HCT116 (cell line): ENCODE measurements at regions of chr11 and their contacts with region 1.

Region 1: GRCh38 chr11:82867495-82868082 is 32.6 kb downstream of the PRCP start:
- DNase-seq: peak; percentile 64
- ATAC-seq: peak; percentile 63
- H3K4me3 ChIP-seq: no peak overlapping the region
- H3K27ac ChIP-seq: no peak overlapping the region
- H3K4me1 ChIP-seq: peaks cover 0 to 3% of the 10 kb centered on the region in 2 experiments; a peak in 1 of 4 replicates
- H3K27me3 ChIP-seq: no peaks in the 10 kb centered on the region
- CTCF ChIP-seq: peak; percentile 55 to 80 (median 63); a peak in 5 of 6 replicates
- POLR2A ChIP-seq: no peak
- RAD21 ChIP-seq: peak; percentile 82

Region 2: DNA sequence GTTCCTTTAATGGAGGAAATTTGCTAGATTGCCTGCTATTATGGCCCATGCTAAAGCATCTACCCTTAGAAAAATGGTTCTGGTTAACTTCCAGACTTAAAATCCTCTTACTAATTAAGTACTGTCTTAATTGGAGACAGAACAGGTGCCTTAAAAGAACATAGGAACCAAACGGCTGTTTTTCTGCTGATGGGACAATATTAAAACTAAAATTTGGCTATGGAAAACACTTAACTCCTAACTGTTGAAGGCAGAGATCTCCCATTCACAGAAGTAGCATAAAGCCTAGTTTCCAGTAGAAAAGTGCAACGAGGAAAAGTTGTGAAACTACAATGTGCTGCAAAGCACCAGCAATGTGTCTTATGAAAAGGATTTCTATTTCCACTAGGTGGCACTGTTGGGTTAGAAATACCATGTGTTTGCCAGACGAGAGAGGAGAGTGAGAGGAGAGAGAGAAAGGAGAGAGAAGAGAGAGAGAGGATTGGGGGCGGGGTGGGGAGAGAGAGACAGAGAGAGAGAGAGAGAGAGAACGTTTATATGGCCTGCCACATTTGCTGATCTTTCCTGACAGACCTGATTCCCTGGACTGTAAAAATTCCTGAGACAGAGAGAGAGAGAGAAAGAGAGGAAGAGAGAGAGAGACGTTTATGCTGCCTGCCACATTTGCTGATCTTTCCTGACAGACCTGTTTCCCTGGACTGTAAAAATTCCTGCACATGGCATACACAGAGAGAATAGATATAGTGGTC is 185.4 kb before region 1 on chr11:
- CTCF ChIA-PET with region 1: no interaction called
- POLR2A ChIA-PET with region 1: no interaction called
- RAD21 ChIA-PET with region 1: no interaction called
- intact Hi-C with region 1: loop called (anchors 1 kb)
- DNase-seq: peak; percentile 65
- ATAC-seq: peak; percentile 97
- H3K4me3 ChIP-seq: no peak overlapping the region
- H3K27ac ChIP-seq: no peak overlapping the region
- H3K4me1 ChIP-seq: no peaks in the 10 kb centered on the region
- H3K27me3 ChIP-seq: peaks cover 11% of the 10 kb centered on the region; the same call in 1 of the 2 replicates
- CTCF ChIP-seq: peak; percentile 46 to 77 (median 72); a peak in 5 of 6 replicates
- POLR2A ChIP-seq: no peak
- RAD21 ChIP-seq: peak; percentile 73

Region 3: DNA sequence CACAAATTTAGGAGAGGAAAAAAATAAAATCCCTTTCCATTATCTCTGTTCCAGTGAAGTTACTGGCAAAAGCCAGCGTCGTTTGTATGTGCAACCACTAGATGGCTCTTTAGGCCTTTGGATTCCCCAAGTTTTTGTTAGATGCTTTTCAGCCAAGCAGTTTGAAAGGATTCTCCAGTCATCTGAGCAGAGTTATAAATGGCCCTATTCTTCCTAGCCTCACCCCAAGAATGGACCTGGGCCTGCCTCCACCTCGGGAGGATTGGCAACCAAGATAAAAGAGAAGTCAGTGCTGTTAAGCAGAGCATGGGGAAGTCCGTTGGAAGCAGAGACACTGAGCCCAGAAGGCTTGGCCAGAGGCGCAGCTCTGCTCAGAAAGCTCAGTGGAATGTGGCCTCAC is 149.3 kb before region 1 on chr11:
- CTCF ChIA-PET with region 1: interaction called, 4 read pairs
- POLR2A ChIA-PET with region 1: no interaction called
- RAD21 ChIA-PET with region 1: no interaction called
- intact Hi-C with region 1: loop called (anchors 1 kb)
- DNase-seq: peak; percentile 19
- ATAC-seq: peak; percentile 85
- H3K4me3 ChIP-seq: no peak overlapping the region
- H3K27ac ChIP-seq: no peak overlapping the region
- H3K4me1 ChIP-seq: no peaks in the 10 kb centered on the region
- H3K27me3 ChIP-seq: peaks cover 23% of the 10 kb centered on the region
- CTCF ChIP-seq: peak; percentile 58 to 74 (median 73); a peak in 5 of 6 replicates
- POLR2A ChIP-seq: no peak
- RAD21 ChIP-seq: peak; percentile 71

Region 4: DNA sequence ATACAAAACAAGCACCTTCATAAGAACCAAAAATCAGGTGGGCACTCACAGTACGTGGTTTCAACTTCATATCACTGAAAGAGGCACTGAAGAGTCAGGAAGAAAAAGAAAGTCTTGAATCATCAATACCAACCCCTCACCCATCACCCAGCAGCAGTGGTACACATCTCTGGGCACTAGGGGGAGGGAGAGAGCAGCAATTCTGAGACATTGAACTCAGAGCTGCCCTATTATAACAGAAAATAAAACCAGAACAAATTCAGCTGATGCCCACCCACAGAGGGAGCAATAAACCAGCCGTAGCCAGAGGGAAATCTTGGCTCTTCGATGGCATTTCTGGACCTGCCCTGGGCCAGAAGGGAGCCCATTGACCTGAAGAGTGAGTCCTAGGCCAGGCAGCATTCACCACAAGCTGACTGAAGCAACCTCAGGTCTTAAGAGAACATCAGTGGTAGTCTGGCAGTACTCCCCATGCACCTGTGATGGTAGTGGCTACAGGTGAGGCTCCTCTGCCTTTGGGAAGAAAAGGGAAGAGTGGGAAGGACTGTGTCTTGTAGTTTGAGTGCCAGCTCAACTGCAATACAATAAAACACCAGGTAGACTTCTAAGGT is 91.7 kb before region 1 on chr11:
- CTCF ChIA-PET with region 1: interaction called, 5 read pairs
- POLR2A ChIA-PET with region 1: no interaction called
- RAD21 ChIA-PET with region 1: no interaction called
- intact Hi-C with region 1: loop called (anchors 2 kb)
- DNase-seq: peak; percentile 36
- ATAC-seq: peak; percentile 100
- H3K4me3 ChIP-seq: peak overlapping the region in 1 of 2 experiments; percentile 2; a peak in 1 of 4 replicates
- H3K27ac ChIP-seq: no peak overlapping the region
- H3K4me1 ChIP-seq: no peaks in the 10 kb centered on the region
- H3K27me3 ChIP-seq: peaks cover 5% of the 10 kb centered on the region; the same call in 1 of the 2 replicates
- CTCF ChIP-seq: peak; percentile 71 to 95 (median 89); a peak in 5 of 6 replicates
- POLR2A ChIP-seq: no peak
- RAD21 ChIP-seq: peak; percentile 65

Region 5: DNA sequence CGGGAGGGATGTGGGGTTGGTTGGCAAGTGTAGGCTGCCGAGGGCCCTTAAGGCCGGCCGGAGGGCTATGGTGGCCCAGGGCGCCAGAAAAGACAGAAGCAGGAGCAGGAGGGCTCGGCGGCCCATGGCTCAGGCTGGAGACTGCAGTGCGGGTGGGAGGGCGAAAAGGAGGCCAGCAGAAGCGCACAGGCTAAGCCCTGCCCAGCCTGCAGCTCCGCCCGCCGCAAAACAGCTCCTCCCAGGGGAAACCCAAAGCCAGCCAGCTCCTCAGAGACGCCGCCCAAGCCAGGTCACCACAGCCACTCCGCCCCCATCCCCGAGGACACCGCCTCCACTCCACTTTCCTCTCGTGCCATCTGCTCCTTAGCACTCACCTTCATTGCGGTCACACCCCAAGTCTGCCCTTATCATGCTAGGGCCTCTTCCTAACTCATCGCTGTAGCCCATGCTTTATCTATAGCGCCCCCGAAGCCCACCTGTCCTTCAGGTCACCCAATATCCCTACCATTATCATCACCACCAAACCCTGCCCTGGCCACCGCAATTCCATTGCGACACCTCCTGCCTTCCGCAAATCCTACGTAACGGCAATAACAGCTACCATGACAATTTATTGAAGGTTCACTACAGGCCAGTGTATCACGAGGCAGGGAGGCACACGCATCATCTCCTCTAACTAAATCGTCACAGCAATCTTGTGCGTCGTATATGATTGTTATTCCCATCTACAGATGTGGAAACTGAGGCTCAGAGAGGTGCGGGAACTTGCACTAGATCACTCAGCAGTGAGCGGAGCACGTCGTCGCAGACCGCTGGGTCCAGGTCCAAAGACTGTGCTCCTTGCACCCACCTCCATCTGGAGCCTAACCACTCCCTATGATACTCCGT is 32.9 kb after region 1 on chr11 and contains the start of gene PRCP:
- CTCF ChIA-PET with region 1: interaction called, 14 read pairs
- POLR2A ChIA-PET with region 1: interaction called, 3 read pairs
- RAD21 ChIA-PET with region 1: no interaction called
- intact Hi-C with region 1: loop called (anchors 2 kb)
- DNase-seq: peak; percentile 82
- ATAC-seq: peak; percentile 89
- H3K4me3 ChIP-seq: peak within 1 kb of the TSS; percentile 55 to 96
- H3K27ac ChIP-seq: peak within 1 kb of the TSS; percentile 69
- H3K4me1 ChIP-seq: peaks cover 10 to 24% of the 10 kb centered on the region in 2 experiments; a peak in 3 of 4 replicates
- H3K27me3 ChIP-seq: no peaks in the 10 kb centered on the region
- CTCF ChIP-seq: 0 out of 6 replicates have a peak, but pooled peaks of 1 of the 3 experiments have one; percentile 2
- POLR2A ChIP-seq: peak; percentile 59
- RAD21 ChIP-seq: no peak
- total RNA-seq, gene PRCP: 50.0 TPM

Region 6: GRCh38 chr11:83235825-83236224 is 368.2 kb after region 1 on chr11:
- CTCF ChIA-PET with region 1: no interaction called
- POLR2A ChIA-PET with region 1: no interaction called
- RAD21 ChIA-PET with region 1: no interaction called
- intact Hi-C with region 1: no loop called
- DNase-seq: no peak
- ATAC-seq: no peak
- H3K4me3 ChIP-seq: no peak overlapping the region
- H3K27ac ChIP-seq: no peak overlapping the region
- H3K4me1 ChIP-seq: no peaks in the 10 kb centered on the region
- H3K27me3 ChIP-seq: no peaks in the 10 kb centered on the region
- CTCF ChIP-seq: no peak
- POLR2A ChIP-seq: no peak
- RAD21 ChIP-seq: no peak